Prostate gland (tissue), 2 donors: ENCODE measurements at regions of chr16 and their contacts with region 1.

Region 1: GRCh38 chr16:50354629-50355456 is 13.9 kb downstream of the BRD7 start:
- DNase-seq: no peak
- H3K4me3 ChIP-seq: no peak overlapping the region
- H3K27ac ChIP-seq: no peak overlapping the region
- H3K4me1 ChIP-seq: peaks cover 4% of the 10 kb centered on the region
- H3K27me3 ChIP-seq: no peaks in the 10 kb centered on the region
- CTCF ChIP-seq: peak; percentile 29 to 54 (median 40)
- POLR2A ChIP-seq: no peak

Region 2: GRCh38 chr16:50152807-50153452 is 201.9 kb before region 1 on chr16 and contains the start of gene TENT4B:
- intact Hi-C with region 1: loop called (anchors 10 kb)
- DNase-seq: peak; percentile 79
- H3K4me3 ChIP-seq: peak within 1 kb of the TSS; percentile 72 to 91
- H3K27ac ChIP-seq: peak within 1 kb of the TSS; percentile 93 to 96
- H3K4me1 ChIP-seq: no peaks in the 10 kb centered on the region
- H3K27me3 ChIP-seq: no peaks in the 10 kb centered on the region
- CTCF ChIP-seq: peak in 1 of 4 experiments; percentile 4
- POLR2A ChIP-seq: peak; percentile 75
- total RNA-seq, gene TENT4B: 11.5 to 15.1 TPM

Region 3: DNA sequence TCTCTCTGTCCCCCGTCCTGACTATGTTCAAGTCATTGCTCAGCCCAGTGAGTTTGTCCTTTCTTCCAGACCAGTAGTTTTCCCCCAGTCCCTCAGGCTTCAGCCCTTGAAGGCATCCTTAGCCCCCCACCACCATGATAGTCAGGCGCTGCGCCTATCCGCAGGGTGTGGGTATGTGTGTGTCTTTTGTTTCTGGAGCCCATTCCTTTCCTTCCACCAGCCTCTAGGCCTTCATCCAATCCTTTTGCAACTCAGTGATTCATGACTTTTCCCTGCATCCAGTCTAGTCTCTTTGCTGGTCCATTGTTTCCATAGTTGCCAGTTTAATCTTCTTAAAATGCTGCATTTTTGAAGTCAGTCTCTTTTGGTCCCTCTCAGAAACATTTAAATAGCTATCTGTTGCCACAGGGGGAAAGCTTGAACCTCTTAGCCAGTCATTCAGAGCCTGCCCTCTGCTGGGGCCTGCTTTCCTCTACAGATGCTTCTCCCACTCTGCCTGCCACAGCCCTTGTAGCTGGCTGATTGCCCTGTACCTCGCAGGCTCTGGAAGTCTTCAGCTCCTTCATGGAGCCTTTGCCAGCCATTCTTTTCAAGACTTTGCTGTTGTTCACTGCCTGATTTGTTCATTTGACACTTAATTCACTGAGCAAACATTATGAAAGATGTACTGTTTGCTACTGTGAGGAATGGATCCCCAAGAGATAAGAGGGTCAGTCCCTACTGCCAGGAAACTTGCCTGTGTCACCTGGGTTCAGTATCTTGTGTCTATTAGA is 144.4 kb before region 1 on chr16:
- intact Hi-C with region 1: loop called (anchors 5 kb)
- DNase-seq: peak; percentile 85
- H3K4me3 ChIP-seq: no peak overlapping the region
- H3K27ac ChIP-seq: no peak overlapping the region
- H3K4me1 ChIP-seq: peaks cover 3% of the 10 kb centered on the region
- H3K27me3 ChIP-seq: no peaks in the 10 kb centered on the region
- CTCF ChIP-seq: peak; percentile 20 to 76 (median 60)
- POLR2A ChIP-seq: no peak

Region 4: DNA sequence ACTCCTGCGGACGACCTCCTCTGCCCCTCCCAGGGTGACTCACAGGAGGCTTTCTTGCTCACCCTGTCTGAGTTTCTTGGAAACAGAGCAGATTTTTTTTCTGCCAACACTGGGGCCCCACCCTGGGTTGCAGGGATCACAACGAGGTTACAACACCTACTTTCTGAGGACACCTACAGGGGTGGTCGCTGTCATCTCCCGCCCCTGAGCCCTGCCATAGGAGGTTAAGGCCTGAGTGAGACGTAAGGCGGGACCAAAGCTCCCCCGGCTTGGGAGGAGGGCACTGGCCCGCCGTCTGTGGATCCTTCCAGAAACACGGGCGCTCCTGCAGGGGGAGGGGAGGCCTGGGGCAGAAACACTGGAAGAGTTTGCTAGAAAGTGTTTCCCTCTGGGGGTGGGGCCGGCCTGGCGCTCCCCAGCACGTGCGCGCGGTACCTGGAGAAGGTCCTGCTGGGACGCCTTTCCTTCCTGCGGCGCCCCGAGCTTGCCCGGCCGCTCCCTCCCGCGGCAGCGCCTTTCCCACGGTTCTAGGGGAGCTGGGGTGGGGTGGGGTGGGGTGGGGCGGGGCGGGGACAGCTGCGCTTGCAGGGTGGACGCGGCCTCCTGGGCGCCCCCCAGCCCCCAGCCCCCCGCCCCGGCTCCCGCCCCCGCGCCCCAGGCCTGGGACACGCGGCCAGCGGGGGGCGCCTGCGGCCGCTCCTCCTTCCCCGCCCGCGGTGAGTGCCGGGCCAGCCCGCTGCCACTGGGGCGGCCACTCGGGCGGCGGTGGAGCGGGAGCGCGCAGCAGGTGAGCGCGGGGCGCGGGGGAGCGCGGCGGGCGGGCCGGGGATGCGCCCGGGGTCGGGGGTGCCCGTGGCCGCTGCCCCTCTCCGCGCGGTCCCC is 109.2 kb before region 1 on chr16:
- intact Hi-C with region 1: loop called (anchors 10 kb)
- DNase-seq: no peak
- H3K4me3 ChIP-seq: peak overlapping the region; percentile 38 to 45
- H3K27ac ChIP-seq: no peak overlapping the region
- H3K4me1 ChIP-seq: no peaks in the 10 kb centered on the region
- H3K27me3 ChIP-seq: no peaks in the 10 kb centered on the region
- CTCF ChIP-seq: peak in 2 of 4 experiments; percentile 15 to 23
- POLR2A ChIP-seq: no peak

Region 5: GRCh38 chr16:50323335-50324011 is 31.4 kb before region 1 on chr16:
- intact Hi-C with region 1: loop called (anchors 5 kb)
- DNase-seq: no peak
- H3K4me3 ChIP-seq: no peak overlapping the region
- H3K27ac ChIP-seq: no peak overlapping the region
- H3K4me1 ChIP-seq: no peaks in the 10 kb centered on the region
- H3K27me3 ChIP-seq: no peaks in the 10 kb centered on the region
- CTCF ChIP-seq: peak in 1 of 4 experiments; percentile 15
- POLR2A ChIP-seq: no peak

Region 6: DNA sequence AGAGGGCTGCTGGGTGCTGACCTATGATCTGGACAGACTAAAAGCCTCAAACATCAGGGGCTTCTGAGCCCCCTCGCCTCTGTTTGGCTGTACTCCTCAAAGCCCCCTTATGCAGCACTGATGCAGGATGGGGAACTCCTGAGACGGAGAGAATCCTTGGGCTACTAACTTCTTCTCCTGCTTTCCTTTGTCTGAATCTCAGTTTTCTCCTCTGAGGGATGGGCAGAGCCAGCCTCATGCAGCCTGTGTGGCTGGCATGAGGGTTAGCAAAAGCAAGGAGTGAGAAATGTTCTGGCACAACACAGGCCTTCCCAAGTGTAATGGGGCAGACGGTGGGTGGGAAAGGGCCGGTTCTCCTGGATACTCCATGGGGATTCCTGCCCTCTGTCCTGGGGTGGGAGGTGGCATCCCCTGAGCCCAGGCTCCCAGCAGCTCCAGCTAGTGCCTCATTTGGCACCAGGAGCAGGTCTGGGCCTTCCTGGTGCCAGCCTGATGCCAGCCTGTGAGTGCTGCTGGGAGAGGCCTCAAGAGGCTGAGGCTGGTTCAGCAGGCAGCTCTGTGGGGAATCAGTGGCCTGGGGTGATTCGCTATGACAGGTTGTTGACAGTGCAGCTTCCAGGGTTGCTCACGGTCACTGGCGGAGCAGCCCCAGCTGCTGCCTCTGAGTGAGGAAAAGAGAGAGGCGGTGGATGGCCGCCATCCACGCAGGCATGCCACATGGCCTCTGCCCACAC is 17.9 kb after region 1 on chr16:
- intact Hi-C with region 1: no loop called
- DNase-seq: no peak
- H3K4me3 ChIP-seq: no peak overlapping the region
- H3K27ac ChIP-seq: no peak overlapping the region
- H3K4me1 ChIP-seq: no peaks in the 10 kb centered on the region
- H3K27me3 ChIP-seq: no peaks in the 10 kb centered on the region
- CTCF ChIP-seq: no peak
- POLR2A ChIP-seq: no peak

Region 7: GRCh38 chr16:50437769-50438437 is 83.1 kb after region 1 on chr16:
- intact Hi-C with region 1: no loop called
- DNase-seq: no peak
- H3K4me3 ChIP-seq: no peak overlapping the region
- H3K27ac ChIP-seq: no peak overlapping the region
- H3K4me1 ChIP-seq: no peaks in the 10 kb centered on the region
- H3K27me3 ChIP-seq: no peaks in the 10 kb centered on the region
- CTCF ChIP-seq: no peak
- POLR2A ChIP-seq: no peak

Region 8: DNA sequence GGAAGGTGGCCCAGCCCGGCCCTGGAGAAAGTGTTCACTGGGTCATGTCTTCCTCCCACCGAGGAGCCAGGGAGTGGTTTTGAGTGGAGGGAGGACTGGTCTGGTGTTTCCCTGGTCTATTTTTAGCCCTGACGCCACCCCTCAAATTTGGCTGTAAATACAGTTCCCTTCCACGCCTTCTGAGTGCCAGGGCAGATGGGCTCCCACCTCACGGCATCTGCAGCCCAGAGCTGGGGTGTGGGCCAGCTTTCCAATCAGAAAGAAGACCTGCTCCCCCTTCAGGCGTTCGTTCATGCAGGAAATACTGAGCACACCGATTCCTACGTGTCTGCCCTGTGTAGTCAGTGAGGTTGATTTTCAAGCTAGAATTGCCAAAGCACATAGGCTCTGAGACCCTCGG is 272.6 kb after region 1 on chr16:
- intact Hi-C with region 1: no loop called
- DNase-seq: peak; percentile 38
- H3K4me3 ChIP-seq: no peak overlapping the region
- H3K27ac ChIP-seq: no peak overlapping the region
- H3K4me1 ChIP-seq: no peaks in the 10 kb centered on the region
- H3K27me3 ChIP-seq: no peaks in the 10 kb centered on the region
- CTCF ChIP-seq: peak in 2 of 4 experiments; percentile 51 to 61
- POLR2A ChIP-seq: no peak